Activated naive CD8-positive, alpha-beta T cell treated with anti-CD3 and anti-CD28 coated beads, Interleukin-2, amount 10 ng/mL, durations not matched to agents 7 days and 5 days (primary cell): ENCODE measurements at regions of chr9 and their contacts with region 1.

Region 1: GRCh38 chr9:114385412-114386181 is 2.2 kb downstream of the AKNA start:
- DNase-seq: peak; percentile 82
- ATAC-seq: peak; percentile 78
- H3K4me3 Mint-ChIP-seq: peak overlapping the region; percentile 99
- H3K27ac Mint-ChIP-seq: peak overlapping the region; percentile 99
- H3K4me1 Mint-ChIP-seq: peaks cover 48% of the 10 kb centered on the region
- H3K27me3 Mint-ChIP-seq: no peaks in the 10 kb centered on the region

Region 2: GRCh38 chr9:114339130-114339908 is 46.3 kb before region 1 on chr9:
- POLR2A ChIA-PET with region 1: interaction called, 104 read pairs
- DNase-seq: peak; percentile 69
- ATAC-seq: peak; percentile 32
- H3K4me3 Mint-ChIP-seq: no peak overlapping the region
- H3K27ac Mint-ChIP-seq: no peak overlapping the region
- H3K4me1 Mint-ChIP-seq: peaks cover 22% of the 10 kb centered on the region
- H3K27me3 Mint-ChIP-seq: no peaks in the 10 kb centered on the region

Region 3: DNA sequence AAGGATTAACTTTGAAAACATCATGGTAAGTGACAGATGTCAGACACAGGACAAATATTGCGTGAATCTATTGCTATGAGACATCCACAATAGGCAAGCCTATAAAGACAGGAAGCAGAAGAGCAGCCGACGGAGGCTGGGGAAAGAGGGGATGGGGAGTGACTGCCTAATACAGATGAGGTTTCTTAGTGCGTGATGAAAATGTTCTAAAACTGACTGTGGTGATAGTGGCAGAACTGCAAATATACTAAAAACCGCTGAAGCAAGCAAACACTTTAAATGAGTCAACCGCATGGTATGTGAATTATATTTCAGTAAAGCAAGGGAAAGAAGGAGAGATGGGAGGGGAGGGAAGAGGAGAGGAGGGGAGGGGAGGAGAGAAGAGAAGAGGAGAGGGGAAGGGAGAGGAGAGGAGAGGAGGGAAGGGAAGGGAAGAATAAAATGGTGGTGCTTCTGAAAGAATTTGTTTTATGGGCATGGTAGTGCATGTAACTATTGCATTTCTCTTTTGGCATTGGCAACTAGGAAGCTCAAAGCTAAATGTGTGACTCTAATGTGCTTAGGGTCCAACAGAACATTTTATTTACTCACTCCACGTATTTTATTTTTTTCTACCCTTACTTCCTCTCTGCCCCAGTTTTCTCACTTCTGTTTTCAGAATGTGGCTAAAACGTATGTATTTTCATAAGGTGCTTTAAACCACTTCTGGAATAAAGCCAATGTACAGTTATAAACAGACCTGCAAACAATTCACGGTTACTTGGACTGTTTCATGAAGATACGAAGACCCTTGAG is 19.1 kb before region 1 on chr9:
- POLR2A ChIA-PET with region 1: interaction called, 637 read pairs
- DNase-seq: no peak
- ATAC-seq: peak; percentile 47
- H3K4me3 Mint-ChIP-seq: peak overlapping the region; percentile 74
- H3K27ac Mint-ChIP-seq: peak overlapping the region; percentile 96
- H3K4me1 Mint-ChIP-seq: peaks cover 78% of the 10 kb centered on the region
- H3K27me3 Mint-ChIP-seq: no peaks in the 10 kb centered on the region

Region 4: GRCh38 chr9:114397848-114398605 is 12.4 kb after region 1 on chr9:
- POLR2A ChIA-PET with region 1: interaction called, 139 read pairs
- DNase-seq: peak; percentile 99
- ATAC-seq: peak; percentile 84
- H3K4me3 Mint-ChIP-seq: peak overlapping the region; percentile 89
- H3K27ac Mint-ChIP-seq: peak overlapping the region; percentile 85
- H3K4me1 Mint-ChIP-seq: peaks cover 29% of the 10 kb centered on the region
- H3K27me3 Mint-ChIP-seq: no peaks in the 10 kb centered on the region

Region 5: DNA sequence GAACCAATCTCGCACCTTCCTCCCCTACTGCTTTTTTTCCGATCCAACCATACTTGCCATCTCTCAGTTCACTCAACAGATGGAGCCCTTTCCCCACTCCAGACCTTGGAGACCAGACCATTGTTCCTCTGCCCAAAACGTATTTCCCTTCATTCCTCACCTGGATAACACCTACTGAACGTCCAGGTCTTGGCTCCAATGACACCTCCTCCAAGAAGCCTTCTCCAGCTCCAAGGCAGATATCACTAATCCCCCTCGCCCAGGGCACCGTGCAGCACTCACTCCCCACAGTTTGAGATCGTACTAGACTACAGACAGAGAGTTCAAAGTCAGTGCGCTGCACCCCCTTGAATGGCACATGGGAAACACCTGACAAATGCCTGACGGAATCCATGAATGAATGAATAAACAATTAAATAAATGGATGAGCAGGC is 49.3 kb after region 1 on chr9:
- POLR2A ChIA-PET with region 1: no interaction called
- DNase-seq: peak; percentile 7
- ATAC-seq: no peak
- H3K4me3 Mint-ChIP-seq: no peak overlapping the region
- H3K27ac Mint-ChIP-seq: no peak overlapping the region
- H3K4me1 Mint-ChIP-seq: peaks cover 5% of the 10 kb centered on the region
- H3K27me3 Mint-ChIP-seq: peaks cover 7% of the 10 kb centered on the region

Region 6: DNA sequence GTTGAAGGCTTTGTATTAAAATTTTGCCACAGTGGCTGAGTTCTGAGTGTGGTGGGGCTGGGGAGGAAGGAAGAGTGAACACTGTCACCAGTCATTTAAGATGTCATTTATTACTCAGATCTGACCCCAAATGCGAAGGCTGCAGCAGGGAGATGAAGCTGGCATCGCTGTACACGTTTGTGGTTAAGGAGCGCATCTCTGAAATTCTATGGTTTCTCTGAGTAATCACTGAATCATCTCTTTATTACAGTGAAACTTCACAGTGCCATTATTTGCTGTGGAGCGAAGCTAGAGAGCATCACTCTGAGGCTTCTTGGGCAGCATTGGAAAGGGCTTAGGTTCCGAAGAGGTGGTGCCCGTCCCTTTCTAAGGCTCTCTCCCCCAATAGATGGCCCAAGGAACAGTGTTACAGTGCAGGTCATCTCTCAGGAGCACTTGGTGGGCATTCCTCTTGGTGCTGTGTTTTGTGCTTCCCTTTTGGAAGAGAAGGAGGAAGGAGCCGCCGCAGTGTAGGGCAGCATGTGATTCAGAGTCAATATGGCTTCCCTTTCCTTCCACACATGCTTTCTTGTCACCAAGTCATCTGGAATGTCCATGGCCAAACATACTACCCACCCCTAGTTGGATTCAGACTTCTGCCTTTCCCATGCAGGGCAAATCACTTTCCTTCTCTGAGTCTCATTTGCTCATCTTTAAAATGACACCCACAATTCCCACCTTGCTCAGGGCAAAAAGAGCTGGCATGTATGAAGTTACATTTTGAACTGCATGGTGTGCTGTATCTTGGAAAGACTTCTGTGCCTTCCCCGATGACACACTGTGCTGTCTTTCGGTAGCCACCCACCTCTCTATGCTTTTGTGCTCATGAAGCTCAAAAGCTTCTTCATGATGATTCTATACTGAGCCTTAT is 305.7 kb after region 1 on chr9:
- POLR2A ChIA-PET with region 1: interaction called, 23 read pairs
- DNase-seq: peak; percentile 57
- ATAC-seq: peak; percentile 93
- H3K4me3 Mint-ChIP-seq: peak overlapping the region; percentile 38
- H3K27ac Mint-ChIP-seq: peak overlapping the region; percentile 99
- H3K4me1 Mint-ChIP-seq: peaks cover 82% of the 10 kb centered on the region
- H3K27me3 Mint-ChIP-seq: no peaks in the 10 kb centered on the region